Activated CD4-positive, alpha-beta T cell treated with anti-CD3 and anti-CD28 coated beads, Interleukin-2, amount 10 ng/mL, durations not matched to agents 7 days and 5 days (primary cell): ENCODE measurements at regions of chr20 and their contacts with region 1.

Region 1: GRCh38 chr20:31644701-31645100 is 7.0 kb downstream of the COX4I2 start:
- DNase-seq: no peak
- H3K4me3 Mint-ChIP-seq: no peak overlapping the region
- H3K27ac Mint-ChIP-seq: no peak overlapping the region
- H3K4me1 Mint-ChIP-seq: peaks cover 22% of the 10 kb centered on the region
- H3K27me3 Mint-ChIP-seq: peaks cover 16% of the 10 kb centered on the region

Region 2: DNA sequence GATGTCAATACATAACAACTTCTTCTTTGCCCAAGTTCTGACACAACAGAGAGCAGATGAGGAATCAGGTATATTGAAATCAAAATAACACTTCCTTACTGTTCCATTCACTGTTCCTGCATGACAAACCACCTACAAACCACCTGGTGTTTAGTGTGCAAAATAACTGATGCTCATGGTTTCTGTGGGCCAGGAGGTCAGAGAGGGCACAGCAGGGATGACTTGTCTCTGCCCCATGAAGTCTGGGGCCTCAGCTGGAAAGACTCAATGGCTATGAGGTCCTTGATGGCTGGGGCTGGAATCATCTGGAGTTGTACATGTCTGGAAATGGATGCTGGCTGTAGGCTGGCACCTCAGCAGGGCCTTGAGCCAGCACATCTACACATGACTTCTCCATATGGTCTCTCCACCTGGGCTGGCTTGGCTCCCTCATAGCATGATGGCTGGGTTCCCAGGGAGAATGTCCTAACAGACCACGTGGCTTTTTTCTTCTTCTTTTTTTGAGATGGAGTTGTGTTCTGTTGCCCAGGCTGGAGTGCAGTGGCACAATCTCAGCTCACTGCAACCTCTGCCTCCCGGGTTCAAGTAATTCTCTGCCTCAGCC is 14.4 kb before region 1 on chr20:
- CTCF ChIA-PET with region 1: interaction called, 12 read pairs
- POLR2A ChIA-PET with region 1: no interaction called
- DNase-seq: no peak
- H3K4me3 Mint-ChIP-seq: no peak overlapping the region
- H3K27ac Mint-ChIP-seq: no peak overlapping the region
- H3K4me1 Mint-ChIP-seq: no peaks in the 10 kb centered on the region
- H3K27me3 Mint-ChIP-seq: peaks cover 2% of the 10 kb centered on the region